Heart right ventricle (tissue), 16 donors: ENCODE measurements at regions of chr20 and their contacts with region 1.

Region 1: DNA sequence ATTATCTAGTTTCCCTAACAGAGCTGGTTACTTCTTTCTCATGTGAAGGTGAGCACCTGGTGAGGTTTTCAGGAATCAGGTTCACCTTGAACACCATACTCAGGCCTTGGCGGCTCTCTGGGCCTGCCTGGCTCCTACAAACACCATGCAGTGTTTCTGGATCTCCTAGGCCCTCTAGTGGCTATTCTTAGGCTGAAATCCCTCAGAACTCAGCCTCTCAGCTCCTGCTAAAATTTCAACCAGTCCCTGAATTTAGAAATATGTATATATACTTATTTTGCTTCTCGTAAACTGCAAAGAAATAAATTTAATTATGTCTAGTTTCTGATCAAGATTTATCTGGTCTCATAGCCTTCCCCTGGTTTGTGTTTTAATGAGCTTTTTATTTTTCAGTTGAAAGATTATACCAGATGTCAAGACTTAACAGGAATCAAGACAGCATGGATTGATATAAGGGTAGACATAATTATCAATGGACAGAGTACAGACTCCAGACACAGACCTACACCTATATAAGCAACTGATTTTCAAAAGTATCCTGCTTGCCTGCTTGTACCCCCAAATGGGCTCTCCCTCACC is 55.9 kb downstream of the ANKEF1 start:
- DNase-seq: peak; percentile 19 to 46
- ATAC-seq: peak; percentile 55 to 80 (median 74)
- H3K4me3 ChIP-seq: no peak overlapping the region
- H3K27ac ChIP-seq: no peak overlapping the region
- H3K4me1 ChIP-seq: no peaks in the 10 kb centered on the region
- H3K27me3 ChIP-seq: peaks cover 0 to 3% (median 0%) of the 10 kb centered on the region in 7 donors
- CTCF ChIP-seq: peak; percentile 41 to 84 (median 77)

Region 2: GRCh38 chr20:10131612-10132345 is 41.1 kb after region 1 on chr20:
- intact Hi-C with region 1: loop called in 1 of 10 experiments (anchors 5 kb)
- DNase-seq: peak; percentile 63 to 71
- ATAC-seq: peak; percentile 86 to 98 (median 97)
- H3K4me3 ChIP-seq: no peak overlapping the region
- H3K27ac ChIP-seq: peak overlapping the region in 4 of 10 donors; percentile 9 to 58 (median 37)
- H3K4me1 ChIP-seq: peaks cover 0 to 13% (median 8%) of the 10 kb centered on the region in 9 donors
- H3K27me3 ChIP-seq: no peaks in the 10 kb centered on the region
- CTCF ChIP-seq: peak in 1 of 9 donors; percentile 19

Region 3: DNA sequence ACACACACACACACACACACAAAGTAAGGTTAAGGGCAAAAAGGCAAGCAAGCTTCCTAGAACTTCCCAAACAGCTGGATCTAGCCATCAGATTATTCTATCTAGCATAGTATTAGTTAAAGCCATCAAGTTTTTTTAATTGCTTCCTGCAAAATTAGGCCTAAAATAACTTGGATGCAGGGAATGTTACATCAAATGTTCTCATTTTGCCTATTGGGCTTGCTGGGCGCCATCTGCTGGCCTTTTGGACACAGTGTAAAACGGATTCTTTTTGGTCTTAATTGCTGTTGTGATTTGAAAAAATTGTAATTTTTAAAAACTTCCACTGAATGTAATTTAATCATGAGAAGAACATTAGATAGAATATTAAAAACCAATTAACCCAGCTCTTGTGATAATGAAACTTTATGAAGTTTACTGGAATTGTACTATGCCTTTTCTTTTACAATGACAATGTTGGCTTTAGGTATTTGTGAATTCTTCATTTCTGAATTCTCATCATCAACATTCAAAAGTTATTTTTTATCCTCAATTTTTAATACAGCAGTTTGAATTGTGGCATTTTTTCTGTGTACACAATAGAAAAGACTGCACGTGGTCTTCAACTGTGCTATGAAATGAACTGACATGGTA is 336.5 kb after region 1 on chr20:
- intact Hi-C with region 1: loop called in 1 of 10 experiments (anchors 5 kb)
- DNase-seq: peak; percentile 39 to 46
- ATAC-seq: peak in 4 of 8 donors; percentile 50 to 64 (median 57)
- H3K4me3 ChIP-seq: no peak overlapping the region
- H3K27ac ChIP-seq: no peak overlapping the region
- H3K4me1 ChIP-seq: peaks cover 0 to 71% (median 34%) of the 10 kb centered on the region in 9 donors
- H3K27me3 ChIP-seq: no peaks in the 10 kb centered on the region
- CTCF ChIP-seq: peak; percentile 52 to 87 (median 76)